Mammary epithelial cell (primary cell): ENCODE measurements at regions of chr5 and their contacts with region 1.

Region 1: DNA sequence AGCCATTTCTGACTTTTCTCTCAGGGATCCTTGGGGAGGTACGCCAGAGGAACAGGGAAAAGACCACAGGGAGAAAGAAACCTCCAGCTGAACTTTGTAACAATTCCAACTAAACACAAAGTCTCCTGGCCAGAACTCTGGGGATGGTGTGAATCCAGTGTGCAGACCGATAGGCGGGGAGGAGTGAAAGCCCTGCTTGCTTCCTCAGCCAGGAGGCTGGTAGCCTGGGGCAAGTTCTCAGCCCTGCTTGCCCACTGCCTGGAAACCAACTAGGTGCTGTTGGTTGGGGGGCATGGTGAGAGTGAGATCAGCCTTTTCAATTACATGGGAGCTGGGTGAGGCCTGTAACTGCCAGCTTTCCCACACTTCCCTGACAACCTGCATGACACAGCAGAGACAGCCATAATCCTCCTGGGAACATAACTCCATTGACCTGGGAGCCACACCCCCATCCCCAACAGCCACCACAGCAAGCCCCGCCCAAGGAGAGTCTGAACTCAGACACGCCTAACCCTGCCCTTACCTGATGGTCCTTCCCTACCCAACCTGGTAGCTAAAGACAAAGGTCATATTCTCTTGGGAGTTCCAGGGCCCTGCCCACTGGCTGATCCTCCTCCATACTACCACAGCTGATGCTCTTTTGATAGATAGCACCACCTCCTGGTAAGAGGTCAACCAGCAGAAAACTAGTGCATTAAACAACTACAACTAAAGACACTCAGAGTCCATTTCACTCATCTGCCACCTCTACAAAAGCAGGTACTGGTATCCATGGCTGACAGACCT is 100.1 kb upstream of the TNFAIP8 start:
- DNase-seq: peak; percentile 57
- H3K4me3 ChIP-seq: no peak overlapping the region
- H3K27ac ChIP-seq: peak overlapping the region; percentile 3
- H3K4me1 ChIP-seq: peaks cover 10% of the 10 kb centered on the region
- H3K27me3 ChIP-seq: no peaks in the 10 kb centered on the region
- CTCF ChIP-seq: peak; percentile 33 to 48

Region 2: GRCh38 chr5:119022017-119022745 is 233.6 kb before region 1 on chr5:
- CTCF ChIA-PET with region 1: interaction called, 9 read pairs
- dilution Hi-C with region 1: no loop called
- in situ Hi-C with region 1: no loop called
- intact Hi-C with region 1: loop called (anchors 1 kb)
- DNase-seq: peak; percentile 25
- H3K4me3 ChIP-seq: no peak overlapping the region
- H3K27ac ChIP-seq: no peak overlapping the region
- H3K4me1 ChIP-seq: no peaks in the 10 kb centered on the region
- H3K27me3 ChIP-seq: no peaks in the 10 kb centered on the region
- CTCF ChIP-seq: peak; percentile 39 to 60

Region 3: DNA sequence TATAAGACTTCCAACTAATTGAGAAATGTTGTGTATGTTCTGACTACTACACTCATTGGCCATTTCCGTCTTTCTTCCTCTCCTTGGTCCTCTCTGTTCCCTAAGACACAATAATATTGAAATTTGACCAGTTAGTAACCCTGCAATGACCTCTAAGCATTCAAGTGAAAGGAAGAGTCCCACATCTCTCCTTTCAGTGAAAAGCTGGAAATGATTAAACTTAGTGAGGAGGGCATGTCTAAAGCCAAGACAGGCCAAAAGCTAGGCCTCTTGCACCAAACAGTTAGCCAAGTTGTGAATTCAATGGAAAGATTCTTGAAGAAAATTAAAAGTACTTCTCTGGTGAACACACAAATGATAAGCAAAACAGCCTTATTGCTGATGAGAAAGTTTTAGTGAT is 1330.9 kb after region 1 on chr5:
- CTCF ChIA-PET with region 1: no interaction called
- dilution Hi-C with region 1: no loop called
- in situ Hi-C with region 1: no loop called
- intact Hi-C with region 1: no loop called
- DNase-seq: no peak
- H3K4me3 ChIP-seq: no peak overlapping the region
- H3K27ac ChIP-seq: no peak overlapping the region
- H3K4me1 ChIP-seq: no peaks in the 10 kb centered on the region
- H3K27me3 ChIP-seq: no peaks in the 10 kb centered on the region
- CTCF ChIP-seq: no peak